HEK293 (cell line): ENCODE measurements at regions of chr6 and their contacts with region 1.

Region 1: DNA sequence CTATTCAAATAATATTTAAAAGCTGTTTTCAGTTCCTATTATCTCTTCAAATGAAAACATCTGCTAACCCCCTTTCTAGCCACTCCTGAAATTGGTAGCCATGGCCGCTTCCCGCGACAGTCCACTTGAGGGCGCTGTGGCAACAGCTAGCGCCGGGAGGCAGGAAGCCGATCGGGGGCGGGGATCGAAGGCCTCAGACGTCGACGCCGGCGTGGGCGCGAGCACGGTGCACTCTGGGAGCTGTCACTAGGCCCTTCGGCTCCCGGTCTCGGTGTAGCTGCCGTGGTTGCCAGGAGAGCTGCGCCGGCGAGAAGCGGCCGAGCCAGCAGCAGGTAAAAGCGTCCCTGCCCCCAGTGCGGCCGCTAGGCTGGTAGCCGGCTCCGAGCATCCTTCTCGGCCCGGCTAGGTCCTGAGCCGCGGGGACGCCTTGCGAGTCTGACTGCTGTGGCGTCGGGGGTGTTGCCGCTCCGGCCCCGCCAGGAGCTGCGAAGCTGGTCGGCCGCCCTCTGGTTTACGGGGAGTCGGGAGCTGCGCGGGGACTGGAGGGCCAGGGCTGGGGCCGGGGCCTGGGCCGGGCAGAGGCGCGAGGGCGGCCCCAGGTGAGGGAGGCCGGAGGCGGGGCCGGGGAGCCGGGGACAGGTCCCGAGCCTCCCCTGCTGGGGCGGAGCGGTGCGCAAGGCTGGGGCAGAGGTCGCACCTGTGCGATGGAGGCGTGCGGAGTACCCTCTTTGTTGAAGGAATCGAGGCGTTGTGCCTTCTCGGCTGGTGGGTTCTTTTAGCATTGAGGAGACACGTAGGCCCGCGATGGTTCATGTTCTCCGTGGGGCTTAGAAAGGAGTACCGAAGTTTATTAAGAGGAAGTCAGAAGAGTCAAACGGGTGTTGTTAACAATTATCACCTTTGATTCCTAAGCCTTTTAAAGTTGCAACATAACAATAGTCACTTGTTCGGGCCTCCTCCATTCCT is at the start of gene DOP1A:
- H3K4me3 ChIP-seq: peak within 1 kb of the TSS; percentile 96
- H3K27ac ChIP-seq: peak within 1 kb of the TSS; percentile 94
- H3K4me1 ChIP-seq: peaks cover 21% of the 10 kb centered on the region; the same call in 1 of the 2 replicates
- CTCF ChIP-seq: peak; percentile 95

Region 2: DNA sequence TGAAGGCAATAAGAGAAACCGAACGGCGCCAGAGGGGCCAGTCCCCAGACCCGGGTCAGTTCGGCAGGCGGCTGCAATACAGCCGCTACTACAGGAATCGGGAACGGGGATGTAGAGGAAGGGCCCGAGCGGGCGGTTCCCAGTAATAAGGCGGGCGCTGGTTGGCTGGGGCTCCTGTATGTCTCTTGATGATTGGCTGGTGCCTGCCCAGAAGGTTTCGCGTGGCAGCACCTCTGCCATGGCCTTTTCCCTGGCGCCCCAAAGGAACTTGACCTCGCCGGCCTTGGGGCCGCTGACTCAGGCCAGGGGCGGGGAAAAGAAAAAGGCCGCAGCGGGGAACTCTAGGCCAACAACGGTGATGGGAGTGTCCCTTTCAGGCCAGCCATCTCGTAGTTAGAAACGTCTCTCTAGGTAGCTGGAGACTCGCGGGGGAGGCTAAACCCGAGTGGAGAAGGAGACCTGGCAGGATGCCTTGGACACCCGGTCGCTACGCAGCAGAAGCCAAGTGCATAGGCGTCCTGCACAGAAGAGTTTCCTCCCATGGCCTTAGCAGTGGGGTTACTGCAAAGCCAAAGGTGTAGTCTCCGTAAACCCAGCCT is 820.0 kb before region 1 on chr6 and contains the start of gene IBTK:
- CTCF ChIA-PET with region 1: interaction called, 27 read pairs
- POLR2A ChIA-PET with region 1: interaction called, 5 read pairs
- H3K4me3 ChIP-seq: peak within 1 kb of the TSS; percentile 78
- H3K27ac ChIP-seq: peak within 1 kb of the TSS; percentile 84
- H3K4me1 ChIP-seq: peaks cover 10% of the 10 kb centered on the region; the same call in 1 of the 2 replicates
- CTCF ChIP-seq: peak; percentile 35; the same call in 1 of the 2 replicates

Region 3: GRCh38 chr6:82270881-82271645 is 796.7 kb before region 1 on chr6:
- CTCF ChIA-PET with region 1: interaction called, 49 read pairs
- POLR2A ChIA-PET with region 1: no interaction called
- H3K4me3 ChIP-seq: no peak overlapping the region
- H3K27ac ChIP-seq: no peak overlapping the region
- H3K4me1 ChIP-seq: no peaks in the 10 kb centered on the region
- CTCF ChIP-seq: peak; percentile 61; the same call in 1 of the 2 replicates

Region 4: GRCh38 chr6:83083476-83083875 is 15.7 kb after region 1 on chr6:
- CTCF ChIA-PET with region 1: interaction called, 12 read pairs
- POLR2A ChIA-PET with region 1: interaction called, 3 read pairs
- H3K4me3 ChIP-seq: no peak overlapping the region
- H3K27ac ChIP-seq: no peak overlapping the region
- H3K4me1 ChIP-seq: no peaks in the 10 kb centered on the region
- CTCF ChIP-seq: no peak

Region 5: GRCh38 chr6:83192871-83193746 is 125.4 kb after region 1 on chr6 and contains the starts of genes PGM3 and RWDD2A:
- CTCF ChIA-PET with region 1: interaction called, 29 read pairs
- POLR2A ChIA-PET with region 1: interaction called, 4 read pairs
- H3K4me3 ChIP-seq: peak within 1 kb of the TSS; percentile 94
- H3K27ac ChIP-seq: peak within 1 kb of the TSS; percentile 76; the same call in 1 of the 2 replicates
- H3K4me1 ChIP-seq: peaks cover 2% of the 10 kb centered on the region; the same call in 1 of the 2 replicates
- CTCF ChIP-seq: peak; percentile 52

Region 6: DNA sequence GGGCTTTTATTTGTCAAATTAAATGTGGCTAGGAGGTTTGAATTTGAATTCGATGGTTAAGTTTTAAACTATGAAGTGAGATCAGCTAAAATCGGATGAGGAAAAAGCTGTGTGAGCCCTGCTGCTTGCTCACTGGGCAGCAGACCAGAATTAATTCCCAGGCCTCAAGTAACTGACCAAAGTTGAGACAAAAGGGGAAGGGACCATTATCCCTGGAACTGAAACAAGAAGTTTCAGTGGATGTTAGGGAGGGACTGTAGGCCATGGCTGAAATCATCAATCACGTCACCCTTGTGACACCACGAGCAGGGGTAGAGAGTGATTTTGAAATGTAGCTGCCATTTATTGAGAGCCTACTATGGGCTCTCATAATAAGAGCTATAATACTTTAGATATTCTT is 437.6 kb after region 1 on chr6:
- CTCF ChIA-PET with region 1: interaction called, 182 read pairs
- POLR2A ChIA-PET with region 1: no interaction called
- H3K4me3 ChIP-seq: no peak overlapping the region
- H3K27ac ChIP-seq: no peak overlapping the region
- H3K4me1 ChIP-seq: no peaks in the 10 kb centered on the region
- CTCF ChIP-seq: no peak